Mammary epithelial cell (primary cell): ENCODE measurements at regions of chrX and their contacts with region 1.

Region 1: DNA sequence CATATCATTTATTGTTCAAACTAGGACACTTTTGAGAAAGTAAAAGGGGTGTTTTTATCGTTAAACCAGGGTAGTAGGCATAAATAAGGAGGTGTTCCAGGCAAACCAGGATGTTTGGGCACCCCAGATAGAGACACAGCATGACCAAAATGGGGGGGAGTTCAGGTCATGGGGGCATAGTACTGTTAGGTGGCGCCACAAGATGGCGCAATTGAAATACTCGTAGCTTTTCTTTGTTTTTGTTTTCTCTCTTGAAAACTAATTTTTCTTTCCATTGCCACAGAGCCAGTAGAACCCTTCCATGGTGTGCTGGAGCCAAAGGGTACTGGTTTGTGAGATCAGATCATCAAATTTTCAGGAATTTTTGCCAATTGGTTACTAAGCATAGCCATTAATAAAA is 283.4 kb downstream of the BCOR start:
- DNase-seq: no peak
- H3K4me3 ChIP-seq: no peak overlapping the region
- H3K27ac ChIP-seq: no peak overlapping the region
- H3K4me1 ChIP-seq: peaks cover 7% of the 10 kb centered on the region
- H3K27me3 ChIP-seq: peaks cover 4% of the 10 kb centered on the region
- CTCF ChIP-seq: peak; percentile 26 to 49

Region 2: GRCh38 chrX:39772057-39772832 is 42.1 kb before region 1 on chrX:
- CTCF ChIA-PET with region 1: no interaction called
- dilution Hi-C with region 1: no loop called
- in situ Hi-C with region 1: no loop called
- intact Hi-C with region 1: no loop called
- DNase-seq: no peak
- H3K4me3 ChIP-seq: no peak overlapping the region
- H3K27ac ChIP-seq: no peak overlapping the region
- H3K4me1 ChIP-seq: no peaks in the 10 kb centered on the region
- H3K27me3 ChIP-seq: no peaks in the 10 kb centered on the region
- CTCF ChIP-seq: no peak

Region 3: DNA sequence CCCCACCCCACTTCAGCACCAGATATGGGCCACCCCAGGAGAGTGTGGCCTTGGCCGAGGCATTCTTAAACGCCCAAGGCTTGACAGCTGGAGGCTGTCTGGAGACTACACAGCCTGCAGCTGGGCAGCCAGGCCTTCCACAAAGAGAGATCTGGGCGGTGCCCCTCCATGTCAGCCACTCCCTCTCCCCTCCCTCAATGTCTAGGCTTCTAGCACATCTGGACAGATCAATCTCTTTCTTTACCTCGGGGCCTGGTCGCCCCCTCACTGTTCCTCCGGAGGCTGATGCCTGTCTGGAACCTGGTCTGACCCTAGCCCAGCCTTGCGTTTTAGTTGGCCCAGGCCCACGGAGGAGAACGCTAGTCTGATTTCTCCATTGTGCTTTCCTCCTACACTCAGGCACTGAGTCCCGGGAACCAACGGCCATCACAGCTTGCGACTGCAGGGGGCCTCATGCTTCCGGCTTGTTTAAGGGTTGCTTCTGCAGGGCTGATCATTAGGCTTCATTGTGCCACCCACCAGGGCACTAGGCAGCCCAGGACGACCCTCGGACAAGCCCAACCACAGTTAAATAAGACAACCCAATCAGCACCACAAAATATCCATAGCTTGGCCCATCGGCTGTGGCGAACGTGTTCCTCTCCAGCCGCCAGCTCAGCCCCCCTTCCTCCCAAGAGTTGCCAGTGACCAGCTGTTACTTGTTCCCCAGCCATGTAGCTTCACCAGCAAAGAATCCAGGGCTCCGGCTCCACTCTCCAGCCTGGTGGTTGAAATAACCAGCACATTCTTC is 82.8 kb after region 1 on chrX:
- CTCF ChIA-PET with region 1: interaction called, 3 read pairs
- dilution Hi-C with region 1: no loop called
- in situ Hi-C with region 1: no loop called
- intact Hi-C with region 1: loop called (anchors 5 kb)
- DNase-seq: peak; percentile 57
- H3K4me3 ChIP-seq: no peak overlapping the region
- H3K27ac ChIP-seq: peak overlapping the region; percentile 41
- H3K4me1 ChIP-seq: peaks cover 36% of the 10 kb centered on the region
- H3K27me3 ChIP-seq: no peaks in the 10 kb centered on the region
- CTCF ChIP-seq: peak in 1 of 2 donors; percentile 11

Region 4: DNA sequence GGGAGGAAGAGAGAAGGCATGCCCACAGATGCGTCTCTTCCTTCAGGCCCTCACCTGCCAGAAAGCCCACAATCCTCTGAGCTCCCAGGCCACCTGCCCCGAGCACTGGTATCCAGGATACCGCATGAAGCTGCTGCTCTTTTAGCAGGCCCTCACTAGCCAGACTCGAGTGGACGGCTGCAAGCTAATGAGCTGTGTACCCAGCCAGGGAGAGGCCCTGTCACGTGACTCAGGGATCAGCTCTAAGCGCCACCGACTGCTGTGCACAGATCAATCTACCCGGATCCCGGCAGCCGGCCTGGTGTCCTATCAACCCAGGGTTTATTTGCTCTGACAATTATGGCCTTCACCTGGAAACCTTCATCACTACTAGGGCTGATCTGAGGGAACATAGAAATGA is 244.3 kb after region 1 on chrX:
- CTCF ChIA-PET with region 1: no interaction called
- dilution Hi-C with region 1: no loop called
- in situ Hi-C with region 1: no loop called
- intact Hi-C with region 1: loop called (anchors 2 kb)
- DNase-seq: no peak
- H3K4me3 ChIP-seq: no peak overlapping the region
- H3K27ac ChIP-seq: no peak overlapping the region
- H3K4me1 ChIP-seq: peaks cover 13% of the 10 kb centered on the region
- H3K27me3 ChIP-seq: no peaks in the 10 kb centered on the region
- CTCF ChIP-seq: no peak

Region 5: GRCh38 chrX:40153335-40154249 is 339.2 kb after region 1 on chrX:
- CTCF ChIA-PET with region 1: interaction called, 3 read pairs
- dilution Hi-C with region 1: no loop called
- in situ Hi-C with region 1: loop called in 1 of 2 experiments (anchors 25 kb)
- intact Hi-C with region 1: loop called (anchors 2 kb)
- DNase-seq: no peak
- H3K4me3 ChIP-seq: peak overlapping the region in 2 of 3 experiments; percentile 24 to 36
- H3K27ac ChIP-seq: no peak overlapping the region
- H3K4me1 ChIP-seq: peaks cover 18% of the 10 kb centered on the region
- H3K27me3 ChIP-seq: peaks cover 41% of the 10 kb centered on the region
- CTCF ChIP-seq: no peak

Region 6: DNA sequence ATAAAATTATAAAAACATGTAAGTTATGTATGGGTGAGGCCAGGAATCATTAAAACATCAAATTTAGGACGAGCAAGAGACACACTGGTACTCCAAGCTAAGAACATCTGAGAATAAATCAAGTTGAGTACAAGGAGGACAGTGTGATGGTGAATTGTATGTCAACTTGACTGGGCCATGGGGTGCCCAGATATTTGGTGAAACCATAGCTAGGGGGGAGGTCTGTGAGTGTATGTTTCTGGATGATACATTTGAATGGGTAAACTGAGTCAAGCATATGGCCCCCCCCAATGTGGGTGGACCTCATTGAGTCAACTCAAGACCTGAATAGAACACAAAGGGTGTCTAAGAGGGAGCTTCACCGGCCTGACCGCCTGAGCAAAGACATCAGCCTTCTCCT is 398.7 kb after region 1 on chrX:
- CTCF ChIA-PET with region 1: no interaction called
- dilution Hi-C with region 1: no loop called
- in situ Hi-C with region 1: no loop called
- intact Hi-C with region 1: no loop called
- DNase-seq: no peak
- H3K4me3 ChIP-seq: no peak overlapping the region
- H3K27ac ChIP-seq: no peak overlapping the region
- H3K4me1 ChIP-seq: no peaks in the 10 kb centered on the region
- H3K27me3 ChIP-seq: no peaks in the 10 kb centered on the region
- CTCF ChIP-seq: no peak

Region 7: DNA sequence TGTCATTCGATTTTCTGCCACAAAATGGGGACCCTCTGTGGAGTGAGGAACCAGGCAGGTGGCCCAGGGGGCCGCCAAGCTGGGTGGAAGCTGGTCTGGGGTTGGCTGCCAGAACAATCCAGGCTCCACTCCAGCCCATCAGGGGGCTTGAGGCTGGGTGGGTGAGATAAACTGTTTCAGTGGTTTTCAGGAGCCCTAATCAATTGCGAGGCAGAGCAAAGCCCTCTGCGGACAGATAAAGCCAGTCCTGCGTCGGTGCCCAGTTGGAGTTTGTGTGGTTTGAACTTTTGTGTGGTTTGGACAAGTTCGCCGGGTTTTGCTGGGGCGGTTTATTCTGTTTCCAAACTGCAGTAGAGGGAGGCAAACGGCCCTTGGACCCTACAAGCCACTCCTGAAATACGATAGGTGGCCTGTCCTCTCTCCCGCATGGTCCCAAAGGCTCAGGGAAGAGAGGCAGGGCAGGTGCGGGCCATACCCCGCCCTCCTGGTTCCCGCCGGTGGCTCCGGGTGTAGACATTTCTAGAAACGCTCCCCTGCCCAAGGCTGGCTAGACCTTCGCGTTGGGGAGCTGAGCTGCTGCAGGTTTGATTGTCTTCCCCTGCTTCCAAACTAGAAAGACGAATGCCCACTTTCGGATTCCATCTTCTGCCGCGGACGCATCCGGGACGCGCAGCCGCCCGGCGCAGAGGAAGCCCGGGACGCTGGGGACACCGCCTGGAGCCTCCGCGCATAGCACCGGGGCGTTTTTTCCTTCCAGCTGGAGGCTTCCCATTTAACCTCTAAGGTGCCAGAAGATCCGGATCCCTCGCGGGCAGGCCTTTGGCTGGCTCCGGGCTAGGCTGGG is 452.3 kb after region 1 on chrX:
- CTCF ChIA-PET with region 1: interaction called, 3 read pairs
- dilution Hi-C with region 1: no loop called
- in situ Hi-C with region 1: no loop called
- intact Hi-C with region 1: loop called (anchors 1 kb)
- DNase-seq: peak; percentile 38
- H3K4me3 ChIP-seq: peak overlapping the region; percentile 5 to 53 (median 41)
- H3K27ac ChIP-seq: no peak overlapping the region
- H3K4me1 ChIP-seq: no peaks in the 10 kb centered on the region
- H3K27me3 ChIP-seq: no peaks in the 10 kb centered on the region
- CTCF ChIP-seq: peak; percentile 55 to 78